Activated CD8-positive, alpha-beta T cell treated with anti-CD3 and anti-CD28 coated beads, Interleukin-2, amount 10 ng/mL, durations not matched to agents 7 days and 5 days (primary cell): ENCODE measurements at regions of chr15 and their contacts with region 1.

Region 1: GRCh38 chr15:41283653-41284426 is 48.6 kb downstream of the OIP5 start:
- DNase-seq: peak; percentile 98
- ATAC-seq: peak; percentile 97
- H3K4me3 Mint-ChIP-seq: peak overlapping the region; percentile 96
- H3K27ac Mint-ChIP-seq: peak overlapping the region; percentile 95
- H3K4me1 Mint-ChIP-seq: peaks cover 49% of the 10 kb centered on the region
- H3K27me3 Mint-ChIP-seq: no peaks in the 10 kb centered on the region

Region 2: GRCh38 chr15:41180206-41180789 is 103.5 kb before region 1 on chr15:
- CTCF ChIA-PET with region 1: no interaction called
- POLR2A ChIA-PET with region 1: no interaction called
- DNase-seq: no peak
- ATAC-seq: no peak
- H3K4me3 Mint-ChIP-seq: no peak overlapping the region
- H3K27ac Mint-ChIP-seq: no peak overlapping the region
- H3K4me1 Mint-ChIP-seq: no peaks in the 10 kb centered on the region
- H3K27me3 Mint-ChIP-seq: peaks cover 9% of the 10 kb centered on the region

Region 3: GRCh38 chr15:41241221-41241964 is 42.4 kb before region 1 on chr15:
- CTCF ChIA-PET with region 1: no interaction called
- POLR2A ChIA-PET with region 1: no interaction called
- DNase-seq: no peak
- ATAC-seq: no peak
- H3K4me3 Mint-ChIP-seq: no peak overlapping the region
- H3K27ac Mint-ChIP-seq: no peak overlapping the region
- H3K4me1 Mint-ChIP-seq: peaks cover 11% of the 10 kb centered on the region
- H3K27me3 Mint-ChIP-seq: no peaks in the 10 kb centered on the region

Region 4: GRCh38 chr15:41331833-41332787 is 48.3 kb after region 1 on chr15 and contains the start of gene OIP5:
- CTCF ChIA-PET with region 1: interaction called, 4 read pairs
- POLR2A ChIA-PET with region 1: interaction called, 17 read pairs
- DNase-seq: peak; percentile 100
- ATAC-seq: peak; percentile 98
- H3K4me3 Mint-ChIP-seq: peak within 1 kb of the TSS; percentile 96
- H3K27ac Mint-ChIP-seq: peak within 1 kb of the TSS; percentile 97
- H3K4me1 Mint-ChIP-seq: peaks cover 26% of the 10 kb centered on the region
- H3K27me3 Mint-ChIP-seq: no peaks in the 10 kb centered on the region
- total RNA-seq, gene OIP5: 22.8 to 23.8 TPM

Region 5: GRCh38 chr15:41407341-41407740 is 123.5 kb after region 1 on chr15:
- CTCF ChIA-PET with region 1: no interaction called
- POLR2A ChIA-PET with region 1: no interaction called
- DNase-seq: no peak
- ATAC-seq: no peak
- H3K4me3 Mint-ChIP-seq: no peak overlapping the region
- H3K27ac Mint-ChIP-seq: no peak overlapping the region
- H3K4me1 Mint-ChIP-seq: peaks cover 11% of the 10 kb centered on the region
- H3K27me3 Mint-ChIP-seq: no peaks in the 10 kb centered on the region